CD4-positive, alpha-beta T cell (primary cell): ENCODE measurements at regions of chr9 and their contacts with region 1.

Region 1: DNA sequence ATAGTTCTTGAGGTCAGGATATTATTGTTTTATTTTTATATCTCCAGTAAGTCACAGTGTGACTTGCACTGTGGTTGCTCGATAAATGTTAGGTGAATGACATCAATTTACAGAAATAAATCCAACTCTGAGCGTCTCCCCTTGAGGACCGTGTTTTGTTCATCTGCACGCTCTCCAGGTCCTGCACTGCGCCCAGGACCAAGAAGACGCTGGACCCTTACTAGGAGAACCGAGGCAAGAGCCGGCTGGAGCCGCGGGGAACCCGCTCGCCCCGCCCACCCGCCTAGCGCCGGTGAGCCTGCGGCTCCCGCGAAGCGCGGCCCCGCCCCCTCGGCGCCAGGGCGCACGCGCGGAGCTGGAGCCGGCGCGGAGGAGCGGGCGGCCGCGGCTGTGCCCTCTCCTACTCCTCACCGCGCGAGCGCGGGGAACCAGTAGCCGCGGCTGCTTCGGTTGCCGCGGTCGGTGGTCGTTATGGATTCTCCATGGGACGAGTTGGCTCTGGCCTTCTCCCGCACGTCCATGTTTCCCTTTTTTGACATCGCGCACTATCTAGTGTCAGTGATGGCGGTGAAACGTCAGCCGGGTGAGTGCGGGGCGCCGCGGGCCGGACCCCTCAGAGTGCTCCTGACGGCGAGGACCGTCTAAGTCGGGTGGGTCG is at the start of gene TMEM38B:
- DNase-seq: peak; percentile 50 to 93 (median 74)
- ATAC-seq: peak; percentile 86
- H3K4me3 ChIP-seq: peak within 1 kb of the TSS; percentile 86
- H3K4me3 Mint-ChIP-seq: peak within 1 kb of the TSS; percentile 93
- H3K27ac ChIP-seq: peak within 1 kb of the TSS in 1 of 2 donors; percentile 22
- H3K27ac Mint-ChIP-seq: peak within 1 kb of the TSS; percentile 73
- H3K4me1 ChIP-seq: peaks cover 7% of the 10 kb centered on the region
- H3K4me1 Mint-ChIP-seq: peaks cover 40% of the 10 kb centered on the region
- H3K27me3 ChIP-seq: peaks cover 9 to 24% of the 10 kb centered on the region in 2 experiments
- H3K27me3 Mint-ChIP-seq: peaks cover 30% of the 10 kb centered on the region
- CTCF ChIP-seq: no peak
- total RNA-seq, gene TMEM38B: 12.9 to 13.9 TPM

Region 2: DNA sequence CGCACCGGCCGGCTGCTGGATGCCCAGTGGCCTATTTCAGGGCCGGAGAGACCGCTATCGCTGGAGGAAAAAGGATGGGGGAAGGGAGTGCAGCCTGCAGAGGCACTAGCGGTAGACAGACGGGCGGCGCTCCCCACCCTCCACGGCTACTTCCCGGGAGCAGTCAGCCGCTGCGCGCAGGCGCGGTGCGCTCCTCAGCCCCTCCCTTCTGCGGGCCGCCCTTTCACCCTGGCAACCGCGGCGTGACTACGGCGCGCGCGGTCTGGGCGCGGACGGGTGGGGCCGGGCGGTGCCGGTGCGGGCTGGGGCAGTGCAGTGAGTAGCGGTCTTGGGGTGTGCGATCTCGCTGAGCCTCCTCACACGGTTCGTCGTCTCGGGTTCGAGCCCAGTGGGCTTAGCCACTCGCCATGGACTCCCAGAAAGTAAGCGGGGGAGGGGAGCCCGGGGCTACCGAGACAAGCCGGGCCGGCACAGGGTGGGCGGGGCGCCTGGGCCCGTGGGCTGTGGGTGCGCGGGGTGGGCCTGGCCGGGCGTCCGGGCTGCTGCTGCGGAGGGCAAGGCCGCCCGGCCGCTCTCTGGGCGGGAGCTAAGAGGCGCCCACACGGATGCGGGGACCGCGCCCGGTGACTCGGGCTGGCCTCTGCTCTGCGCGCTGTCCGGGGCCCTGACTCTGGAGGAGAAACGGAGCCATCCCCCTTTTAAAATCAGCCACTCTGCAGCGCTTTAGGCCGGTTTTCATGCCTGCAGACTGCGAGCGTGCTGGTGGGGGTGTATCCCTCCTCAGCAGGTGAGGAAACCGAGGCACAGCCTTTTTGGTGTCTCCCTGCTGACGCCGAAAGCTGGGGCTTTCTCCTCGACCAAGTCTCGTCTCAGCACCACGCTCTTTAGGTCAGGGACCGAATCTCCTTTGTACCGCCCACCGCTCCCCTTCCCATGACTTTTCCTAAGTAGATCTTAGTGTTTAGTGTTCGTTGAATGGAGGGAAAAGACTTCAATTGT is 246.2 kb before region 1 on chr9 and contains the start of gene FSD1L:
- CTCF ChIA-PET with region 1: no interaction called
- POLR2A ChIA-PET with region 1: no interaction called
- intact Hi-C with region 1: loop called in 1 of 2 experiments (anchors 5 kb)
- DNase-seq: peak; percentile 51 to 90 (median 72)
- ATAC-seq: peak; percentile 92
- H3K4me3 ChIP-seq: peak within 1 kb of the TSS; percentile 66
- H3K4me3 Mint-ChIP-seq: peak within 1 kb of the TSS; percentile 89
- H3K27ac ChIP-seq: no peak within 1 kb of the TSS
- H3K27ac Mint-ChIP-seq: peak within 1 kb of the TSS; percentile 28
- H3K4me1 ChIP-seq: peaks cover 11% of the 10 kb centered on the region
- H3K4me1 Mint-ChIP-seq: peaks cover 6% of the 10 kb centered on the region
- H3K27me3 ChIP-seq: no peaks in the 10 kb centered on the region
- H3K27me3 Mint-ChIP-seq: no peaks in the 10 kb centered on the region
- CTCF ChIP-seq: no peak
- total RNA-seq, gene FSD1L: 0.38 to 0.56 TPM

Region 3: DNA sequence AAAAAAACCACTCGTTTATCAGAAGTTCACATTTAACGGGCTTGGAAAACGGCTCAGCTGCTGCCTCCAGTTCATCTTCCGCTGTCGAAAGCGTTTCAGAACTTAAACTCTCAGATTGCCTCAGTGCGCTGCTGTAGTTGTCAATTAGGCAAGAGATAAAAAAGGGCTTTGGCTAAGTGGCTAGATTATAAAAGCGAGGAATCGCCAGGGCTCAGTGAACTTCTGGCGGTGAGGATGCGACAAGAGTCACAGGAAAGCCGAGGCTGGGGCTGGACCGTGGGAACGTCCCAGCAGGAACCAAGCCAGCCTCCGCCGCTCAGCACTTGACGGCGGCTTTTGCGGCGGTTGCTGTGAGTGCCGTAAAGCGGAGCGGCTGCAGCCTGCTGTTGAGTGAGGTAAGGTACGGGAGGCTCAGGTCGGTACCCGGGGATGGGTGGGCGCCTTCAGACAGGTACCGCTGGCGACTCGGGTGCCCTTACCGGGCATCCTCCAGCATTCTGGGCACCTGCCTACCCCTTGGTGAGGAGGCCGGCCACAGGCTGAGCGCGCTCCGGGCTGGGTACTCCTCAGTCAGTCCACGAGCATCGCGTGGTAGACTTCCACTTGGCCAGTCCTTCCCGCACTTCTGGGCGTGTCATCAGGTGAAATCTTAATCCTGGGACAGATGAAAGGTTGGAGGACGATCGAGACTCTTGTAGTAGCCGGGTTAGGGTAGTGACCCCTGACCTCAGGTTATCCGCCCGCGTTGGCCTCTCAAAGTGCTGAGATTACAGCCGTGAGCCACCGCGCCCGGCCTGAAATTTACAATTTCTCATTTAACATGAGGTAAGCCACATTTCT is 136.3 kb before region 1 on chr9 and contains the start of gene FKTN:
- CTCF ChIA-PET with region 1: no interaction called
- POLR2A ChIA-PET with region 1: interaction called, 3 read pairs
- intact Hi-C with region 1: loop called in 1 of 2 experiments (anchors 5 kb)
- DNase-seq: peak; percentile 56 to 87 (median 72)
- ATAC-seq: peak; percentile 96
- H3K4me3 ChIP-seq: peak within 1 kb of the TSS; percentile 94
- H3K4me3 Mint-ChIP-seq: peak within 1 kb of the TSS; percentile 93
- H3K27ac ChIP-seq: peak within 1 kb of the TSS; percentile 30 to 47
- H3K27ac Mint-ChIP-seq: peak within 1 kb of the TSS; percentile 83
- H3K4me1 ChIP-seq: peaks cover 12% of the 10 kb centered on the region
- H3K4me1 Mint-ChIP-seq: peaks cover 19% of the 10 kb centered on the region
- H3K27me3 ChIP-seq: no peaks in the 10 kb centered on the region
- H3K27me3 Mint-ChIP-seq: no peaks in the 10 kb centered on the region
- CTCF ChIP-seq: no peak
- total RNA-seq, gene FKTN: 5.7 to 5.8 TPM

Region 4: GRCh38 chr9:105637787-105638395 is 56.4 kb before region 1 on chr9:
- CTCF ChIA-PET with region 1: no interaction called
- POLR2A ChIA-PET with region 1: no interaction called
- intact Hi-C with region 1: no loop called
- DNase-seq: no peak
- ATAC-seq: no peak
- H3K4me3 ChIP-seq: no peak overlapping the region
- H3K4me3 Mint-ChIP-seq: no peak overlapping the region
- H3K27ac ChIP-seq: no peak overlapping the region
- H3K27ac Mint-ChIP-seq: no peak overlapping the region
- H3K4me1 ChIP-seq: no peaks in the 10 kb centered on the region
- H3K4me1 Mint-ChIP-seq: no peaks in the 10 kb centered on the region
- H3K27me3 ChIP-seq: no peaks in the 10 kb centered on the region
- H3K27me3 Mint-ChIP-seq: no peaks in the 10 kb centered on the region
- CTCF ChIP-seq: peak; percentile 18

Region 5: DNA sequence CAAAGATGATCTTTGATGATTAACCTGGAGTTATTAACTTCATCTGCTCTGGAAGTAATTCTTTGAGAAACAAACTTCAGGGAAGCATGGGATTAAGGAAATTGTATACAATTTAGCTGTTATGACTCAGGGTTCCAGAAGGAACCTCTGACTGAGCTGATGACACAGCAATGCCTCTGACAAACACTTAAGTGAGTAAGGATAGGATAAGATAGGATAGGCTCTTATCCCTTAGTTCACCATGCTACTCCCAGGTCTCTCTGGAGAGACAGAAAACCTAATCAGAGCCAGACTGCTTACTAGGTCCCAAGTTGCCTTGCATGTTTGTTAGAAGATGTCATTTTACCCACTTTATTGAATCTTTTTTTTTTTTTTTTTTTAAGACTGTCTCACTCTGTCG is 12.6 kb before region 1 on chr9:
- CTCF ChIA-PET with region 1: no interaction called
- POLR2A ChIA-PET with region 1: no interaction called
- intact Hi-C with region 1: no loop called
- DNase-seq: no peak
- ATAC-seq: no peak
- H3K4me3 ChIP-seq: no peak overlapping the region
- H3K4me3 Mint-ChIP-seq: no peak overlapping the region
- H3K27ac ChIP-seq: no peak overlapping the region
- H3K27ac Mint-ChIP-seq: no peak overlapping the region
- H3K4me1 ChIP-seq: no peaks in the 10 kb centered on the region
- H3K4me1 Mint-ChIP-seq: no peaks in the 10 kb centered on the region
- H3K27me3 ChIP-seq: no peaks in the 10 kb centered on the region
- H3K27me3 Mint-ChIP-seq: no peaks in the 10 kb centered on the region
- CTCF ChIP-seq: no peak